CD8-positive, alpha-beta T cell (primary cell): ENCODE measurements at regions of chr6 and their contacts with region 1.

Region 1: GRCh38 chr6:166244353-166245045 is 63.7 kb downstream of the PRR18 start:
- DNase-seq: peak in 6 of 9 experiments; percentile 15 to 77 (median 56)
- ATAC-seq: peak; percentile 89
- H3K4me3 ChIP-seq: peak overlapping the region; percentile 34 to 47
- H3K4me3 Mint-ChIP-seq: peak overlapping the region; percentile 79
- H3K27ac ChIP-seq: peak overlapping the region in 1 of 2 experiments; percentile 56
- H3K27ac Mint-ChIP-seq: peak overlapping the region; percentile 76
- H3K4me1 ChIP-seq: peaks cover 19% of the 10 kb centered on the region
- H3K4me1 Mint-ChIP-seq: peaks cover 42% of the 10 kb centered on the region
- H3K27me3 ChIP-seq: peaks cover 0 to 4% of the 10 kb centered on the region in 2 experiments
- H3K27me3 Mint-ChIP-seq: no peaks in the 10 kb centered on the region
- CTCF ChIP-seq: no peak

Region 2: GRCh38 chr6:166258854-166259276 is 14.4 kb after region 1 on chr6:
- CTCF ChIA-PET with region 1: interaction called, 6 read pairs
- POLR2A ChIA-PET with region 1: interaction called, 5 read pairs
- intact Hi-C with region 1: loop called in 1 of 2 experiments (anchors 2 kb)
- DNase-seq: peak in 7 of 9 experiments; percentile 29 to 72 (median 54)
- ATAC-seq: peak; percentile 66
- H3K4me3 ChIP-seq: no peak overlapping the region
- H3K4me3 Mint-ChIP-seq: peak overlapping the region; percentile 73
- H3K27ac ChIP-seq: no peak overlapping the region
- H3K27ac Mint-ChIP-seq: peak overlapping the region; percentile 96
- H3K4me1 ChIP-seq: peaks cover 20% of the 10 kb centered on the region
- H3K4me1 Mint-ChIP-seq: peaks cover 50% of the 10 kb centered on the region
- H3K27me3 ChIP-seq: no peaks in the 10 kb centered on the region
- H3K27me3 Mint-ChIP-seq: no peaks in the 10 kb centered on the region
- CTCF ChIP-seq: no peak